Heart right ventricle (tissue), 16 donors: ENCODE measurements at regions of chr6 and their contacts with region 1.

Region 1: GRCh38 chr6:79009819-79010218 is 68.2 kb downstream of the PHIP start:
- DNase-seq: no peak
- ATAC-seq: peak in 5 of 8 donors; percentile 15 to 68 (median 41)
- H3K4me3 ChIP-seq: no peak overlapping the region
- H3K27ac ChIP-seq: peak overlapping the region in 1 of 10 donors; percentile 46
- H3K4me1 ChIP-seq: peaks cover 0 to 33% (median 12%) of the 10 kb centered on the region in 9 donors
- H3K27me3 ChIP-seq: no peaks in the 10 kb centered on the region
- CTCF ChIP-seq: no peak

Region 2: DNA sequence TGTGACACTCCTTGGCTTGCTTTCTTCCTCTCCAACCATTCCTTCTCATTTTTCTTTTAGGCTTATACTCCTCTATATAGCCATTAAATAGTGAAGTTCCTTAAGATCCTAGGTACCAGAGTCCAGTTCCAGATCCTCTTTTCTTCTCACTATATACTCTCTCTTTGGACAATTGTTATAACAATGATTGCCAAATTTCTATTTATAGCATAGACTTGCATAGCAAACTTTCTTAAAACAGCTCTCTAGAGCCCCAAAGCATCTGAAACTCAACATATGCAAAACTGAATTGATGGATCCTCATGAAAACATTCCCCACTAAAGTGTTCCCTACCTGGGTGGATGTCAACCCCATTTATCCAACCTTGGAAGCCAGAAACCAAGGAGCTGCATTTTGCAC is 54.8 kb after region 1 on chr6:
- intact Hi-C with region 1: loop called in 1 of 10 experiments (anchors 10 kb)
- DNase-seq: no peak
- ATAC-seq: no peak
- H3K4me3 ChIP-seq: no peak overlapping the region
- H3K27ac ChIP-seq: no peak overlapping the region
- H3K4me1 ChIP-seq: peaks cover 0 to 78% (median 26%) of the 10 kb centered on the region in 9 donors
- H3K27me3 ChIP-seq: no peaks in the 10 kb centered on the region
- CTCF ChIP-seq: no peak